ENCODE measurements at regions of chr13 and their contacts with region 1.

Region 1: GRCh38 chr13:102913914-102914313 is 68.1 kb downstream of the ERCC5 start:
- DNase-seq: no peak
- ATAC-seq: no peak
- H3K4me3 ChIP-seq: no peak overlapping the region
- H3K27ac ChIP-seq: no peak overlapping the region
- H3K4me1 ChIP-seq: no peaks in the 10 kb centered on the region
- H3K27me3 ChIP-seq: no peaks in the 10 kb centered on the region
- CTCF ChIP-seq: no peak

Region 2: GRCh38 chr13:103140001-103140671 is 226.2 kb after region 1 on chr13:
- CTCF ChIA-PET with region 1: interaction called, 3 read pairs
- POLR2A ChIA-PET with region 1: no interaction called
- in situ Hi-C with region 1: no loop called
- intact Hi-C with region 1: loop called (anchors 5 kb)
- DNase-seq: peak; percentile 13
- ATAC-seq: peak; percentile 66; the same call in 1 of the 2 replicates
- H3K4me3 ChIP-seq: no peak overlapping the region
- H3K27ac ChIP-seq: no peak overlapping the region
- H3K4me1 ChIP-seq: no peaks in the 10 kb centered on the region
- H3K27me3 ChIP-seq: no peaks in the 10 kb centered on the region
- CTCF ChIP-seq: peak; percentile 54

Region 3: GRCh38 chr13:103876571-103876970 is 962.7 kb after region 1 on chr13:
- CTCF ChIA-PET with region 1: no interaction called
- POLR2A ChIA-PET with region 1: no interaction called
- in situ Hi-C with region 1: no loop called
- intact Hi-C with region 1: loop called (anchors 10 kb)
- DNase-seq: no peak
- ATAC-seq: no peak
- H3K4me3 ChIP-seq: no peak overlapping the region
- H3K27ac ChIP-seq: no peak overlapping the region
- H3K4me1 ChIP-seq: no peaks in the 10 kb centered on the region
- H3K27me3 ChIP-seq: no peaks in the 10 kb centered on the region
- CTCF ChIP-seq: no peak

Measured in Panc1 (cell line).